Dorsolateral prefrontal cortex (tissue), 120 donors: ENCODE measurements at regions of chr20 and their contacts with region 1.

Region 1: DNA sequence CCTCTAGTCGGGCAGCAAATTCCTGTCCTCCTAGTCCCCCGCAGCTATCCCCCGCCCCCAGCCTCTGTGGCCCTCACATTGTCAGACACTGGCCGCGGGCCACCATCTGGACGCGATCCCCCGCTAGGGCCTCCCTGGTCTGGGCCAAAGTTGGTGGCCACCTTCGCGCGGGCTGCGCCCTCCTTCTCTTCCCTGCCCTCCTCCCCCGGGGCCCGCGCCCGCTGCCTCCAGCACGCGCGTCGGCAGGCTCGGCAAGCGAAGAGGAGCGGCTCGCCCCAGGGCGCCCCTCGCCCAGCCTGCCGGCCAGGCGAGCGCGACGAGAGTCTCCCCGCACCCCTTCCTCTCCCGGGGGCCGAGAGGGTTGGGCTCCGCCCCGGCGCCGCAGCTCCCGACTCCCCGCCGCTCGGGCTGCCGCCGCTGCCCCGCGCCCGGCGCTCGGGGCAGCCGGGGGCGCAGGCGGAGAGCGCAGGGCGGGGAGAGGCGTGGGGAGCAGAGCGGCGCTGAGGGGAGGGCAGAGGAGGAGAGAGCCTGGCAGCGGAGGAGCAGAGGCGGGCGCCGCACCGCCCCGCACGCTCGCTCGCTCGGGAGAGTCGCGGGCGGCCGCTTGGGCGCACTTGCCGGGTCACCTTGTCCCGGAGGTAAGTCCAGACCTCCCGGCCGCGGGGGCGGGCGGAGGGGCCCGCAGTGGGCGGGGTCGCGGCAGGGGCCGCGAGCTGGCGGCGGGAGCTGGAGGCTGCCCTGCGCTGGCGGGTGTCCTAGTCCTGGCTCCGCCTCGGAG is at the start of gene SYNDIG1:
- DNase-seq: peak; percentile 68 to 84 (median 76)
- H3K4me3 ChIP-seq: peak within 1 kb of the TSS; percentile 55 to 92 (median 80)
- H3K27ac ChIP-seq: peak within 1 kb of the TSS; percentile 78 to 98 (median 93)
- H3K27me3 ChIP-seq: peaks cover 0 to 11% (median 0%) of the 10 kb centered on the region in 45 donors
- CTCF ChIP-seq: peak in 8 of 56 donors; percentile 2 to 33 (median 12)
- total RNA-seq, gene SYNDIG1: 26.8 to 67.4 (median 45.8) TPM

Region 2: GRCh38 chr20:24303381-24303780 is 165.9 kb before region 1 on chr20:
- intact Hi-C with region 1: loop called (anchors 5 kb)
- DNase-seq: peak in 3 of 10 donors; percentile 26 to 69 (median 65)
- H3K4me3 ChIP-seq: no peak overlapping the region
- H3K27ac ChIP-seq: no peak overlapping the region
- H3K27me3 ChIP-seq: peaks cover 0 to 8% (median 0%) of the 10 kb centered on the region in 45 donors
- CTCF ChIP-seq: peak in 51 of 56 donors; percentile 20 to 76 (median 54)

Region 3: GRCh38 chr20:24392612-24393011 is 76.7 kb before region 1 on chr20:
- intact Hi-C with region 1: no loop called
- DNase-seq: no peak
- H3K4me3 ChIP-seq: no peak overlapping the region
- H3K27ac ChIP-seq: no peak overlapping the region
- H3K27me3 ChIP-seq: peaks cover 0 to 6% (median 0%) of the 10 kb centered on the region in 45 donors
- CTCF ChIP-seq: no peak

Region 4: DNA sequence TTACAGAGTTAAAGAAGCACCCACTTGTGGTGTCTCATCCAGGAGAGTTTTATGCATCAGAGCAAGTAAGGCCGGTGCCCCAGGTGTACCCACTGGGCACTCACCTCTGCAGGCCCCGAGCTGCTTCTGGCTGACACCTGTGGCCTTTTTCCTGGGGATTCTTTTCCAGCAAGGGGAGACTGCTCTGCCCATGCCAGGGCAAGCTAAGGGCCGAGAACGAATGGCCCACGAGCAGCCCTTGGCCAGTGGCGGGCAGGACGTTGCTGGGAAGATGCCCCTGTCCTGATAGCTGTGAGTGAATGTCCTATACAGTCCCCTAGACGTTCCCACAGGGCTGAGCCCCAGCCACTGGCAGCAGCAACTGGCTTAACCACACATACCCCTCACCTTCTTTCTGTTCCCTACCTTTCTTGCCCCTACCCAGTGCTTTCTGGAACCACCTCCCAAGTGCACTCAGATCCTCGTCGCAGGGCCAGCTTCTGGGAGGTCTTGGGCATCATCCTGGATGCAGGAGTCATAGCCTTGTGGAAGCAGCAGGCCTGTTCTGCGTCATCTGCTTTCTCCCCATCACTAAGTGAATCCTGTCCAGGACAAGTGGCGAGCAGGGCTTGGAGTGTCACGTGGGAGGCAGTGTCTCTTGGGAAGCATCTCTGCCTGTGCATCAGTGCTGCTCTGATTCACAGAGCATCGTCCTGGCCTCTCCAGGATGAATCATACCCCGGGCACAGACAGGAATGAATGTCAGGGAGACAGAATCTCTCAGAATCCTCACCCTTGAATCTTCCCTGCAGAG is 32.7 kb after region 1 on chr20:
- intact Hi-C with region 1: loop called (anchors 2 to 5 kb)
- DNase-seq: peak; percentile 64 to 95 (median 87)
- H3K4me3 ChIP-seq: peak overlapping the region in 3 of 59 donors; percentile 4 to 21 (median 11)
- H3K27ac ChIP-seq: peak overlapping the region; percentile 23 to 94 (median 85)
- H3K27me3 ChIP-seq: no peaks in the 10 kb centered on the region
- CTCF ChIP-seq: peak in 1 of 56 donors; percentile 16

Region 5: GRCh38 chr20:24522452-24523330 is 53.4 kb after region 1 on chr20:
- intact Hi-C with region 1: no loop called
- DNase-seq: no peak
- H3K4me3 ChIP-seq: no peak overlapping the region
- H3K27ac ChIP-seq: peak overlapping the region in 55 of 59 donors; percentile 3 to 91 (median 76)
- H3K27me3 ChIP-seq: no peaks in the 10 kb centered on the region
- CTCF ChIP-seq: no peak

Region 6: DNA sequence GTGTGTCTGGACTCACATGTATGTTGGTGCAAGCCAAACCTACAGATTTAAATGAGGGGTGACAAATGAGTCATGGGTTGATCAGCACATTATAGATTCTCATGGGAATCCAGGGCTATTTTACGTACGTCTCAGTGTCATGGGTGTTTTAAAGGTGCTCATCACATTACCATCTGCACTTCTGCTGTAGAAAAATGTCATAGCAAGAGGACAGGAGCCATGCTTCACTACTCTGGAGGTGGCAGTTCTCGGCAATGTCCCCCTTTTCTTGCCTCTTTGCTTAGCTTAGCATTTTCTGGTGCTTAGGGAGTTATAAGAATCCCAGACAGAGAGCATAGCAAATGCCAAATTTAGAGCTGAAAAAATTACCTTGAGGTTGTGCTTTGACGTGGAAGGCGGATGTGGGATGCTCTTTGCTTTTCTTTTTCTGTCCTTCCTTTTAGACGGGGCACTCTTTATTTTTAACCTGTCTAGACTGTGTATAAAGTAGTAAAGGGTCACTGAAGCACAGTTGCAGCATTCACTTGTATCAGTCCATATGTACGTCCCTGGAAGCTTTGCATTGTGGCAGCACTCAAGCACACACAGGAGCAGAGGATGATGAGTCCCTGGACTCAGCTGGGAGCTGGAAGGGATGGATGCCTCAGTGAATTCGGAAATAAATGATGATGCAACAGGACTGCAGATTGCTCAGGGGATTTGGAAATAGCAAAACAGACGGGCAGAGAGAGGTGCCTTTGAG is 139.8 kb after region 1 on chr20:
- intact Hi-C with region 1: no loop called
- DNase-seq: no peak
- H3K4me3 ChIP-seq: no peak overlapping the region
- H3K27ac ChIP-seq: peak overlapping the region in 31 of 59 donors; percentile 4 to 72 (median 32)
- H3K27me3 ChIP-seq: no peaks in the 10 kb centered on the region
- CTCF ChIP-seq: no peak

Region 7: DNA sequence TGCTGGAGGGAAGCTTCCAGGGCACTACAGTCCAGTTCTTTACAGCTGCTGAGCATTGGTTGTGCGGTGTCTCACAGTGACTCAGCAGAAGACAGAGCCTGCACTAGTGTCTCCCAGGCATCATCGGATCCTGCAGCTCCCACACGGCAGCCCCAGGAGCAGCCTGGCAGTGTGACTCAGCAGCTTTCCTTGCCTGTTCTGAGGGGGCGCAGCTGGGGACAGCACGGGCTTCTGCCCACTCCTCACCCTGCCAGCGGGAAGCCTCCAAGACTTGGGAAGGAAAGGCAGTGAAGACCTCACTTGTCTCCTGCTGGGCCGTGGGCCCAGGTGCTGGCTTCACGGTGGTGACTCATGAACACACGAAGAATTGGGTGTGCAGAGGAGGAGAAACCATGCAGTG is 165.6 kb after region 1 on chr20:
- intact Hi-C with region 1: loop called in 1 of 2 experiments (anchors 10 kb)
- DNase-seq: peak; percentile 37 to 91 (median 80)
- H3K4me3 ChIP-seq: peak overlapping the region in 2 of 59 donors; percentile 3 to 10
- H3K27ac ChIP-seq: peak overlapping the region in 47 of 59 donors; percentile 0 to 78 (median 50)
- H3K27me3 ChIP-seq: no peaks in the 10 kb centered on the region
- CTCF ChIP-seq: peak in 2 of 56 donors; percentile 9 to 20

Region 8: GRCh38 chr20:24917797-24918578 is 448.7 kb after region 1 on chr20:
- intact Hi-C with region 1: loop called in 1 of 2 experiments (anchors 10 kb)
- DNase-seq: peak; percentile 67 to 81 (median 74)
- H3K4me3 ChIP-seq: peak overlapping the region in 10 of 59 donors; percentile 17 to 48 (median 26)
- H3K27ac ChIP-seq: peak overlapping the region in 6 of 59 donors; percentile 9 to 46 (median 34)
- H3K27me3 ChIP-seq: no peaks in the 10 kb centered on the region
- CTCF ChIP-seq: peak; percentile 77 to 96 (median 92)